OCI-LY7 (cell line): ENCODE measurements at regions of chr16 and their contacts with region 1.

Region 1: GRCh38 chr16:30526823-30527635 is 663 bp upstream of the ZNF768 start:
- DNase-seq: peak; percentile 98
- H3K4me3 ChIP-seq: peak overlapping the region; percentile 84
- H3K27ac ChIP-seq: peak overlapping the region; percentile 86
- H3K4me1 ChIP-seq: peaks cover 27% of the 10 kb centered on the region
- CTCF ChIP-seq: peak; percentile 48

Region 2: GRCh38 chr16:30445408-30446202 is 81.4 kb before region 1 on chr16 and contains the start of gene SEPHS2:
- CTCF ChIA-PET with region 1: no interaction called
- POLR2A ChIA-PET with region 1: interaction called, 3 read pairs
- intact Hi-C with region 1: loop called (anchors 2 kb)
- DNase-seq: peak; percentile 99
- H3K4me3 ChIP-seq: peak within 1 kb of the TSS; percentile 86
- H3K27ac ChIP-seq: peak within 1 kb of the TSS; percentile 84
- H3K4me1 ChIP-seq: peaks cover 37% of the 10 kb centered on the region
- CTCF ChIP-seq: peak; percentile 70
- total RNA-seq, gene SEPHS2: 14.4 and 15.3 TPM in 2 replicates

Region 3: GRCh38 chr16:30602616-30603277 is 75.7 kb after region 1 on chr16:
- CTCF ChIA-PET with region 1: no interaction called
- POLR2A ChIA-PET with region 1: no interaction called
- intact Hi-C with region 1: loop called (anchors 5 kb)
- DNase-seq: no peak
- H3K4me3 ChIP-seq: no peak overlapping the region
- H3K27ac ChIP-seq: no peak overlapping the region
- H3K4me1 ChIP-seq: peaks cover 4% of the 10 kb centered on the region
- CTCF ChIP-seq: no peak

Region 4: DNA sequence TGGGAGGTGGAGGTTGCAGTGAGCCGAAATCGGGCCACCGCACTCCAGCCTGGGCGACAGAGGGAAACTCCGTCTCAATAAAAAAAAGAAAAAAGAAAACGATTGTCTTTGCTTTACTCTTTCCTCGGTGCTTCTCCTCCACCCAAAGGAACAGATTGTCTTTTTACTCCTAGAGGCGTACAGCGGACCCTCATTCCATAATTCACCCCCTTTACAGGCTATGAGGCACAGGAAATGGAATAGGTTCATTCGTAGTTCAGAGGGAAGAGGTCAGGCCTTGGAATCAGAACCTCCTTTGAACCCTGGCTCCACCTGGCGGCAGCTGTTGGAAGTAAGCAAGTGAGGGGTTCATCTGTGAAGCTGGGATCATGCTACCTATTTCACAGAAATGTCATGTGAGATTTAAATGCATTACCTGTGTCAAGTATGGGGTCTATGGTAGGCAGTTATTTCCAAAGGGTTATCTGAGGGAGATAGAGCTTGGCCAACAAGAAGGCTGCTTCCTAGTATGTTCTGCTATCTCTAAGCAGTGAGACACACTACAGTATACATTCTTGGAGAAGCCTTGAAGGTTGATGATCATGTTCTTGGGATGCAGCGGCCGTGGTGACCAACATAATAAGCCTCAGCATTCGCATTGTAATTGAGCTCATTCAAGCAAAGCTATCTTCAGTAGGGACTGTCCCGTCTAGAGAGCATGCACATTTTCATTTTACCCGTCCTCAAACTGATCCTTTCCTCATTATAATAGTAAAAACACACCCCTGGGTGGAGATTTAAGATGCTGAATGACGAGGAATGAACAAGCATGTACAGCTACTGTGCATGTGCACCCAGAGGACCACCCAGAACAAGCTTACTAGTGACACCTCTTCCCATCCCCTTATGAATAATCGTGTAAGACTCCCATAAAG is 101.9 kb after region 1 on chr16:
- CTCF ChIA-PET with region 1: no interaction called
- POLR2A ChIA-PET with region 1: interaction called, 4 read pairs
- intact Hi-C with region 1: loop called (anchors 2 kb)
- DNase-seq: peak; percentile 84
- H3K4me3 ChIP-seq: no peak overlapping the region
- H3K27ac ChIP-seq: no peak overlapping the region
- H3K4me1 ChIP-seq: peaks cover 15% of the 10 kb centered on the region
- CTCF ChIP-seq: peak; percentile 97